ENCODE measurements at regions of chr19 and their contacts with region 1.

Region 1: DNA sequence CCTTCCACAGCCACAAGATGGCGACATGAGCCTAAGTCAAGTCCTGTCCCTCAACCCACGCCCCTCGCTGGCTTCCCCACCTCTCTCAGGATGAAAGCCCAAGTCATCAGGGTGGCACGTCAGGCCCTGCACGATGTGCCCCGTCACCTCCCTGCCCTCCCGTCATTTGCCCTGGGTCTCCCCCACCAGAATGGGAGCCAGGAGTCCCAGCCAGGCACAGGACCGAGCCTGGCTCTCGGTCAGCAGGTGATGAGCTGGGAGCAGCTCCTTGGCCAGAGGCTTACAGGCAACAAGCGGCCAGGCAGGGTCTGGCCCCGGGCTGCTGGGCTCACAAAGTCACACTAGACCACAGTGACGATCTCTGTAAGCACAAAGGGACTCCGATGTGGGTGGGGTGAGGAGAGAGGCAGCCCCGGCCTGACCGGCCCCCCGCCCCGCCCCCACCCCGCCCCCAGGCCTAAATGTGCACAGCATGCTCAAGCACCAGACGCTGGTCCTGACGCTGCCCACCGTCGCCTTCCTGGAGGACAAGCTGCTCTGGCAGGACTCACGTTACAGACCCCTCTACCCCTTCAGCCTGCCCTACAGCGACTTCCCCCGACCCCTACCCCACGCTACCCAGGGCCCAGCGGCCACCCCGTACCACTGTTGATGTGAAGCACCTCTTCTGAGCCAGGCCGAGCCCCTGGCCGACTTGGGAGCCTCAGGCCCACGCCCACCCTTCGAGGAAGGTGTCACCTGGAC is 7.3 kb downstream of the MRPL4 start:
- DNase-seq: peak; percentile 88
- H3K4me3 ChIP-seq: no peak overlapping the region; a peak in 1 of 4 replicates
- H3K27ac ChIP-seq: no peak overlapping the region
- H3K4me1 ChIP-seq: no peaks in the 10 kb centered on the region; a peak in 1 of 4 replicates
- H3K27me3 ChIP-seq: no peaks in the 10 kb centered on the region
- CTCF ChIP-seq: peak; percentile 73
- EP300 ChIP-seq: no peak
- RAD21 ChIP-seq: peak; percentile 73

Region 2: GRCh38 chr19:8884416-8884815 is 1374.9 kb before region 1 on chr19:
- CTCF ChIA-PET with region 1: no interaction called
- POLR2A ChIA-PET with region 1: no interaction called
- DNase-seq: no peak
- H3K4me3 ChIP-seq: no peak overlapping the region
- H3K27ac ChIP-seq: no peak overlapping the region
- H3K4me1 ChIP-seq: no peaks in the 10 kb centered on the region
- H3K27me3 ChIP-seq: no peaks in the 10 kb centered on the region
- CTCF ChIP-seq: no peak
- EP300 ChIP-seq: no peak
- RAD21 ChIP-seq: no peak

Region 3: GRCh38 chr19:10206226-10206885 is 53.0 kb before region 1 on chr19:
- CTCF ChIA-PET with region 1: no interaction called
- POLR2A ChIA-PET with region 1: no interaction called
- DNase-seq: no peak
- H3K4me3 ChIP-seq: no peak overlapping the region
- H3K27ac ChIP-seq: no peak overlapping the region
- H3K4me1 ChIP-seq: no peaks in the 10 kb centered on the region
- H3K27me3 ChIP-seq: no peaks in the 10 kb centered on the region
- CTCF ChIP-seq: no peak
- EP300 ChIP-seq: no peak
- RAD21 ChIP-seq: no peak

Region 4: DNA sequence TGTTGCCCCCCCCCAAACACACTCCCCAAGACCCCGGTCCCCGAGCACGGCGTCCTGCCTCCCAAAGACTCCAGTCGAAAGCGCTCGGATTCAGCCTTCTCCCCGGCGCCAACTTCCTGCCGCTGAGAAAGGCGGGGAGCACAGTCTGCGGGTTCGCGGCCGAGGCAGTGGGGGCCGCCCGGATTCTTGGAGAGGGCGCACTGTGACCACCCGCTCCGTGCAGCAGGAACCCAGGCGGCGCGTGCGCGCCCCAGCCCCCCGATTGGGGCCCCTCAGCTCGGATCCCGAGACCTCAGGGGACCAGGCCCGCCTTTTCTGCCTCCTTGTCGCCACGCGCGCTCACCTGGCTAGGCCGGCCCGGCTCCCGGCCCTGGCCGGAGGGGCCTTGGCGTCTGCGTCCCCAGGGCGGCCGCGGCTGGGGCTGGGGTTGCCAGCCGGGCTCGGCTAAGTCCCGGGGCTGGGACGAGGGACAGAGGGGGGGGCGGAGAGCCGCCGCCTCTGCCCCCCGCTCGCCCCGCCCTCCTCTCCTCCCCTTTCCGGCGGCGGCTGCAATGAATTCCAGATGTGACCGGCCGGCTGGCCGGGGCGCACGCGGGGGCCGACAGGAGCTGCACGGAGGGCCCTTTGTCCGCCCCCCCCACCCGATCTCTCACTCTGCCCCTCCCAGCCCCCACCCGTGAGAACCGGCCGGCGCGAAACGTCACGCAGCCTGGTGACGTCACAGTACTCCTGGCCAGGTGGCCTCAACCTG is 28.3 kb before region 1 on chr19 and contains the start of gene S1PR2:
- CTCF ChIA-PET with region 1: interaction called, 11 read pairs
- POLR2A ChIA-PET with region 1: no interaction called
- DNase-seq: peak; percentile 97
- H3K4me3 ChIP-seq: peak within 1 kb of the TSS; percentile 72 to 98
- H3K27ac ChIP-seq: peak within 1 kb of the TSS; percentile 54 to 88; a peak in 3 of 4 replicates
- H3K4me1 ChIP-seq: peaks cover 0 to 25% of the 10 kb centered on the region in 2 experiments; a peak in 1 of 4 replicates
- H3K27me3 ChIP-seq: no peaks in the 10 kb centered on the region
- CTCF ChIP-seq: no peak
- EP300 ChIP-seq: no peak; a peak in 1 of 4 replicates
- RAD21 ChIP-seq: no peak
- polyA plus RNA-seq, gene S1PR2: 3.6 and 3.8 TPM in 2 replicates

Region 5: GRCh38 chr19:10245189-10245939 is 14.0 kb before region 1 on chr19:
- CTCF ChIA-PET with region 1: interaction called, 16 read pairs
- POLR2A ChIA-PET with region 1: no interaction called
- DNase-seq: no peak
- H3K4me3 ChIP-seq: no peak overlapping the region
- H3K27ac ChIP-seq: no peak overlapping the region
- H3K4me1 ChIP-seq: no peaks in the 10 kb centered on the region
- H3K27me3 ChIP-seq: no peaks in the 10 kb centered on the region
- CTCF ChIP-seq: no peak
- EP300 ChIP-seq: no peak
- RAD21 ChIP-seq: no peak

Region 6: GRCh38 chr19:10279737-10280442 is 20.6 kb after region 1 on chr19:
- CTCF ChIA-PET with region 1: interaction called, 16 read pairs
- POLR2A ChIA-PET with region 1: no interaction called
- DNase-seq: no peak
- H3K4me3 ChIP-seq: no peak overlapping the region
- H3K27ac ChIP-seq: no peak overlapping the region
- H3K4me1 ChIP-seq: no peaks in the 10 kb centered on the region
- H3K27me3 ChIP-seq: no peaks in the 10 kb centered on the region
- CTCF ChIP-seq: no peak
- EP300 ChIP-seq: no peak
- RAD21 ChIP-seq: no peak

Region 7: DNA sequence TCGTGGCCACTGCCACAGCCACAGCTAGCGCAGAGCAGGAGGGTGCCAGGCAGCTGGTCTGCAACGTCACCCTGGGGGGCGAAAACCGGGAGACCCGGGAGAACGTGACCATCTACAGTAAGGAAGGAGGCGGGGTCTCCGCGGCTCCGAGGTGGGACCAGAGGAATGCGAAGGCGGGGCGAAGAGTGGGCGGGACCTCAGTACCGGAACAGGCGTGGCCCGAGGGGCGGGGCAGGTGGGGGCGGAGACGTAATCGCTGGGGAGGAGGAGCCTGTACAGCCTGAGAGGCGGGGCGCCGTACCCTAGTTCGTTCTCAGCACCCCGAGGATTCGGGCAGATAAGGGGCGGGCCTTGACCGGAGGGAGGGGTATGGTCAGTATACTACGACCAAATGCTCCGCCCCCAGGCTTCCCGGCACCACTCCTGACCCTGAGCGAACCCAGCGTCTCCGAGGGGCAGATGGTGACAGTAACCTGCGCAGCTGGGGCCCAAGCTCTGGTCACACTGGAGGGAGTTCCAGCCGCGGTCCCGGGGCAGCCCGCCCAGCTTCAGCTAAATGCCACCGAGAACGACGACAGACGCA is 33.0 kb after region 1 on chr19:
- CTCF ChIA-PET with region 1: interaction called, 25 read pairs
- POLR2A ChIA-PET with region 1: no interaction called
- DNase-seq: peak; percentile 92
- H3K4me3 ChIP-seq: peak overlapping the region; percentile 45 to 77
- H3K27ac ChIP-seq: no peak overlapping the region
- H3K4me1 ChIP-seq: peaks cover 0 to 39% of the 10 kb centered on the region in 2 experiments; a peak in 1 of 4 replicates
- H3K27me3 ChIP-seq: no peaks in the 10 kb centered on the region; the same call in 1 of the 2 replicates
- CTCF ChIP-seq: no peak
- EP300 ChIP-seq: no peak
- RAD21 ChIP-seq: no peak

Region 8: GRCh38 chr19:10395003-10395402 is 135.7 kb after region 1 on chr19:
- CTCF ChIA-PET with region 1: interaction called, 596 read pairs
- POLR2A ChIA-PET with region 1: interaction called, 3 read pairs
- DNase-seq: no peak
- H3K4me3 ChIP-seq: no peak overlapping the region
- H3K27ac ChIP-seq: no peak overlapping the region
- H3K4me1 ChIP-seq: no peaks in the 10 kb centered on the region
- H3K27me3 ChIP-seq: no peaks in the 10 kb centered on the region
- CTCF ChIP-seq: no peak
- EP300 ChIP-seq: no peak
- RAD21 ChIP-seq: no peak

Region 9: GRCh38 chr19:10403137-10404021 is 144.0 kb after region 1 on chr19 and contains the start of gene CDC37:
- CTCF ChIA-PET with region 1: interaction called, 30 read pairs
- POLR2A ChIA-PET with region 1: no interaction called
- DNase-seq: peak; percentile 98
- H3K4me3 ChIP-seq: peak within 1 kb of the TSS; percentile 89 to 98
- H3K27ac ChIP-seq: peak within 1 kb of the TSS; percentile 75 to 80
- H3K4me1 ChIP-seq: peaks cover 9 to 15% of the 10 kb centered on the region in 2 experiments; a peak in 3 of 4 replicates
- H3K27me3 ChIP-seq: no peaks in the 10 kb centered on the region
- CTCF ChIP-seq: no peak
- EP300 ChIP-seq: no peak
- RAD21 ChIP-seq: no peak
- polyA plus RNA-seq, gene CDC37: 1,026 and 1,054 TPM in 2 replicates

Measured in SK-N-SH (cell line).